ENCODE measurements at regions of chr17 and their contacts with region 1.

Region 1: GRCh38 chr17:28612936-28613872 is 781 bp downstream of the RSKR start:
- DNase-seq: peak in 6 of 7 donors; percentile 28 to 69 (median 40)
- H3K4me3 ChIP-seq: no peak overlapping the region
- H3K27ac ChIP-seq: peak overlapping the region in 1 of 5 donors; percentile 14
- H3K4me1 ChIP-seq: no peaks in the 10 kb centered on the region
- H3K27me3 ChIP-seq: no peaks in the 10 kb centered on the region
- CTCF ChIP-seq: peak; percentile 27 to 66 (median 56)
- POLR2A ChIP-seq: no peak

Region 2: DNA sequence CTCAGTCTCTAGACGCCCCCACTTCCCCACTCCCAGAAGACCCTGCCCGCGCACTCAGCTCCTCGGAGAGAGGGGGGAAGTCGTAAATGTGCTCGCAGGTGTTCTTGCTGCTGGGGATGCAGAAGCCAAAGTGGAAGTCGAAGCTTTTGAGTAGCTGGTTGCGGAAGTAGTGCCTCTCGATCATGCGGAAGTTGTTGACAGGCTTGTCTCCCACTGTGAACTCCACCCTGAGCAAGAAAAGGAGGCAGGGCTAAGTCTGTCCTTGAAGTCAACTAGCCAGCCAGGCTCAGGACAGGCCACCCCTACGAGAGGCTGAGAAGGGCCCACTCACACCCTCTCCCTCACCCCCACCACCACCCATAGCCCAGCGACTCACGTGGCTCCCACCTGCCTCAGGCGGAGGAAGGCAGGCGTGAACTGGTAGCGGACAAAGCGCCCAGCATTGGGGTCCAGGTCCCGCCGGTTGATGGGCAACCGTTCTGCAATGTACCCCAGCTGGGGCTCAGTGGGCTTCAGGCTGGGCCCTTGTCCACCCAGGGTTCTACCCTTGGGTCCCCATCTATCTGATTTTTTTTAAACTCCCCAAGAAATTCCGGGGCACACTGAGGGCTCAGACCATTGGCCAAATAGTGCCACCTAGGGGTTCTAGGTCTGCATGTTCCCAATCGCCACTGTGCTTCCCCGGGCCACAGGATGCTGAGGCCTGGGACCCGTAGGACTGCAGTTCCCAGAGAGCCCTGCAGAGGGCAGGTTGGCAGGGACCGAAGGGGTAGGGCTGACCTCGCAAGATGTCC is 65.4 kb before region 1 on chr17:
- intact Hi-C with region 1: loop called (anchors 5 kb)
- DNase-seq: peak; percentile 78 to 91 (median 82)
- H3K4me3 ChIP-seq: no peak overlapping the region
- H3K27ac ChIP-seq: peak overlapping the region in 2 of 5 donors; percentile 37 to 44
- H3K4me1 ChIP-seq: peaks cover 7 to 19% of the 10 kb centered on the region in 2 donors
- H3K27me3 ChIP-seq: no peaks in the 10 kb centered on the region
- CTCF ChIP-seq: peak; percentile 84 to 98 (median 90)
- POLR2A ChIP-seq: no peak

Measured in adrenal gland (tissue), 19 donors.